CD4-positive, alpha-beta T cell (primary cell): ENCODE measurements at regions of chr14 and their contacts with region 1.

Region 1: GRCh38 chr14:50792051-50792477 is 38.9 kb downstream of the NIN start:
- DNase-seq: peak in 7 of 14 experiments; percentile 17 to 61 (median 38)
- ATAC-seq: peak; percentile 68
- H3K4me3 ChIP-seq: peak overlapping the region; percentile 41
- H3K4me3 Mint-ChIP-seq: peak overlapping the region; percentile 77
- H3K27ac ChIP-seq: peak overlapping the region; percentile 64 to 77
- H3K27ac Mint-ChIP-seq: peak overlapping the region; percentile 93
- H3K4me1 ChIP-seq: peaks cover 26% of the 10 kb centered on the region
- H3K4me1 Mint-ChIP-seq: peaks cover 87% of the 10 kb centered on the region
- H3K27me3 ChIP-seq: no peaks in the 10 kb centered on the region
- H3K27me3 Mint-ChIP-seq: no peaks in the 10 kb centered on the region
- CTCF ChIP-seq: no peak

Region 2: DNA sequence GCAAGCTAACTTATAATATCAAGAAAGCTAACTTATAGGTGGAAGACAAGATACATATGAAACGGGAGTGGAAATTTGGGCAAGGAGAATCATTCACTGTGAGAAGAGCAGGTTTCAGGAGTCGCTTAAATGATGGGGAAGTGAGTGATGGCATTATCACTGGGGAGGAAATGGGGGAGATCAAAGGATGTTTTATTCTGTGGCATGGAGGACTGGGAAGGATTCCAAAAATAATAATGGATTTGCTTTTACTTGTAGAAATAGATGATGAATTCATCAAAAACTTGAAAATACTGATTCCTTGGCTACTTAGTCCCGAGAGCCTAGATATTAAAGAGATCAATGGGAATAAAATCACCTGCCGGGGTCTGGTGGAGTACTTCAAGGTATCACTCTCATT is 171.7 kb before region 1 on chr14:
- CTCF ChIA-PET with region 1: no interaction called
- POLR2A ChIA-PET with region 1: no interaction called
- intact Hi-C with region 1: no loop called
- DNase-seq: no peak
- ATAC-seq: no peak
- H3K4me3 ChIP-seq: no peak overlapping the region
- H3K4me3 Mint-ChIP-seq: no peak overlapping the region
- H3K27ac ChIP-seq: no peak overlapping the region
- H3K27ac Mint-ChIP-seq: no peak overlapping the region
- H3K4me1 ChIP-seq: no peaks in the 10 kb centered on the region
- H3K4me1 Mint-ChIP-seq: no peaks in the 10 kb centered on the region
- H3K27me3 ChIP-seq: no peaks in the 10 kb centered on the region
- H3K27me3 Mint-ChIP-seq: no peaks in the 10 kb centered on the region
- CTCF ChIP-seq: no peak

Region 3: DNA sequence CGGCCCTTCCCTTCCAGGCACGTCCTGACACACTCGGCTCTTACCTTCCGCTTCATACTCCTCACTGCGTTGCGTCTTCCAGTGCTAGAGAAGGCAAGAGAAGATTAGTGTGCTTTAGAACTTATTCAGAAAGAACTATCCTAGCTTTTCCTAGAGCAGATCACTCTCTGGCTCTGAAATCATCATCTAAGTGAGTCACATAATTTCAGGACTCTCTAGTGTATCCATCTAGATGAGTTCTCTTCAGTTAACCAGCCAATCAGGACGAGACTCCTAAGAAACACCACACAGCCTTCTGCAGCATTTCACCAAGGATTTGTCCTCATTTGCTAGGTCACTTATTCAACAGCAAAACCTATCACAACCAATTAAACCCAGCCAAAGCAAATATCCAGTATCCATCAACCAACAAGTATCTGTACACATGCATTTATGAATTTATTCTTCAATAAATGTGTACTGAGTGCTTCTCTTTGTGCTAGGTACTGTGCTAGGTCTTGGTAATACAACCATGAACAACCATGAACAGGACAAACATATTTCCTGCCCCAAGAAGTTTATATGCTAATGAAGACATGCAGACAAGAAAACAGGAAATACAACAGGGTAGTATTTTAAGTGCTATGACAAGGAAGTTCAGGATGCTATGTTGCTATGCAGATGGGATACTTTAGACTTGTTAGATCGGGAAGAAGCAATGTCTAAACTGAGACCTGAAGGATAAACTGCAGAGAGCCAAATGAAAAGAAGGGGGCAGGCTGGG is 13.2 kb before region 1 on chr14:
- CTCF ChIA-PET with region 1: interaction called, 22 read pairs
- POLR2A ChIA-PET with region 1: interaction called, 8 read pairs
- intact Hi-C with region 1: no loop called
- DNase-seq: peak in 1 of 14 experiments; percentile 37
- ATAC-seq: no peak
- H3K4me3 ChIP-seq: no peak overlapping the region
- H3K4me3 Mint-ChIP-seq: no peak overlapping the region
- H3K27ac ChIP-seq: no peak overlapping the region
- H3K27ac Mint-ChIP-seq: peak overlapping the region; percentile 54
- H3K4me1 ChIP-seq: peaks cover 30% of the 10 kb centered on the region
- H3K4me1 Mint-ChIP-seq: peaks cover 77% of the 10 kb centered on the region
- H3K27me3 ChIP-seq: no peaks in the 10 kb centered on the region
- H3K27me3 Mint-ChIP-seq: no peaks in the 10 kb centered on the region
- CTCF ChIP-seq: no peak

Region 4: GRCh38 chr14:50813544-50813863 is 21.4 kb after region 1 on chr14:
- CTCF ChIA-PET with region 1: interaction called, 3 read pairs
- POLR2A ChIA-PET with region 1: interaction called, 9 read pairs
- intact Hi-C with region 1: loop called in 1 of 2 experiments (anchors 2 kb)
- DNase-seq: peak in 4 of 14 experiments; percentile 15 to 78 (median 72)
- ATAC-seq: peak; percentile 89
- H3K4me3 ChIP-seq: peak overlapping the region; percentile 28
- H3K4me3 Mint-ChIP-seq: peak overlapping the region; percentile 82
- H3K27ac ChIP-seq: peak overlapping the region; percentile 56 to 57
- H3K27ac Mint-ChIP-seq: peak overlapping the region; percentile 81
- H3K4me1 ChIP-seq: peaks cover 42% of the 10 kb centered on the region
- H3K4me1 Mint-ChIP-seq: peaks cover 65% of the 10 kb centered on the region
- H3K27me3 ChIP-seq: no peaks in the 10 kb centered on the region
- H3K27me3 Mint-ChIP-seq: no peaks in the 10 kb centered on the region
- CTCF ChIP-seq: no peak

Region 5: GRCh38 chr14:50823051-50823761 is 31.1 kb after region 1 on chr14:
- CTCF ChIA-PET with region 1: interaction called, 3 read pairs
- POLR2A ChIA-PET with region 1: interaction called, 49 read pairs
- intact Hi-C with region 1: loop called in 1 of 2 experiments (anchors 5 kb)
- DNase-seq: peak in 1 of 14 experiments; percentile 23
- ATAC-seq: peak; percentile 8
- H3K4me3 ChIP-seq: peak overlapping the region; percentile 11
- H3K4me3 Mint-ChIP-seq: peak overlapping the region; percentile 73
- H3K27ac ChIP-seq: peak overlapping the region; percentile 66 to 78
- H3K27ac Mint-ChIP-seq: peak overlapping the region; percentile 85
- H3K4me1 ChIP-seq: peaks cover 56% of the 10 kb centered on the region
- H3K4me1 Mint-ChIP-seq: peaks cover 95% of the 10 kb centered on the region
- H3K27me3 ChIP-seq: no peaks in the 10 kb centered on the region
- H3K27me3 Mint-ChIP-seq: no peaks in the 10 kb centered on the region
- CTCF ChIP-seq: no peak

Region 6: GRCh38 chr14:50830932-50831725 is 39.1 kb after region 1 on chr14 and contains the start of gene NIN:
- CTCF ChIA-PET with region 1: no interaction called
- POLR2A ChIA-PET with region 1: interaction called, 49 read pairs
- intact Hi-C with region 1: loop called (anchors 5 to 10 kb)
- DNase-seq: peak; percentile 47 to 89 (median 68)
- ATAC-seq: peak; percentile 83
- H3K4me3 ChIP-seq: peak within 1 kb of the TSS; percentile 90
- H3K4me3 Mint-ChIP-seq: peak within 1 kb of the TSS; percentile 99
- H3K27ac ChIP-seq: peak within 1 kb of the TSS; percentile 65 to 88
- H3K27ac Mint-ChIP-seq: peak within 1 kb of the TSS; percentile 92
- H3K4me1 ChIP-seq: peaks cover 37% of the 10 kb centered on the region
- H3K4me1 Mint-ChIP-seq: peaks cover 74% of the 10 kb centered on the region
- H3K27me3 ChIP-seq: no peaks in the 10 kb centered on the region
- H3K27me3 Mint-ChIP-seq: no peaks in the 10 kb centered on the region
- CTCF ChIP-seq: no peak
- total RNA-seq, gene NIN: 96.8 to 98.5 TPM